A549 (cell line): ENCODE measurements at regions of chr17 and their contacts with region 1.

Region 1: GRCh38 chr17:38617011-38617867 is 11.5 kb upstream of the SRCIN1 start:
- DNase-seq: no peak
- ATAC-seq: peak in 1 of 2 experiments; percentile 26; a peak in 2 of 6 replicates
- H3K4me3 ChIP-seq: no peak overlapping the region
- H3K27ac ChIP-seq: no peak overlapping the region
- H3K4me1 ChIP-seq: peaks cover 13% of the 10 kb centered on the region; the same call in 2 of the 3 replicates
- CTCF ChIP-seq: no peak
- EP300 ChIP-seq: no peak
- POLR2A ChIP-seq: no peak
- RAD21 ChIP-seq: no peak

Region 2: GRCh38 chr17:38605888-38606645 is 11.2 kb before region 1 on chr17 and contains the start of gene SRCIN1:
- CTCF ChIA-PET with region 1: interaction called, 86 read pairs
- POLR2A ChIA-PET with region 1: no interaction called
- DNase-seq: peak; percentile 70
- ATAC-seq: peak; percentile 21 to 66
- H3K4me3 ChIP-seq: peak within 1 kb of the TSS; percentile 71
- H3K27ac ChIP-seq: peak within 1 kb of the TSS; percentile 76 to 93
- H3K4me1 ChIP-seq: peaks cover 25% of the 10 kb centered on the region
- CTCF ChIP-seq: peak; percentile 100
- EP300 ChIP-seq: no peak
- POLR2A ChIP-seq: peak; percentile 42
- RAD21 ChIP-seq: peak; percentile 44 to 66
- polyA plus RNA-seq, gene SRCIN1: 1.3 and 1.4 TPM in 2 replicates